ENCODE measurements at regions of chr2 and their contacts with region 1.

Region 1: GRCh38 chr2:34105015-34105767 is 506.1 kb upstream of the FAM98A start:
- DNase-seq: peak; percentile 83
- H3K4me3 ChIP-seq: peak overlapping the region in 1 of 3 experiments; percentile 3
- H3K27ac ChIP-seq: peak overlapping the region; percentile 73
- H3K4me1 ChIP-seq: peaks cover 17% of the 10 kb centered on the region
- H3K27me3 ChIP-seq: no peaks in the 10 kb centered on the region
- CTCF ChIP-seq: no peak

Region 2: GRCh38 chr2:34050413-34050812 is 54.8 kb before region 1 on chr2:
- CTCF ChIA-PET with region 1: interaction called, 12 read pairs
- dilution Hi-C with region 1: no loop called
- in situ Hi-C with region 1: no loop called
- intact Hi-C with region 1: no loop called
- DNase-seq: no peak
- H3K4me3 ChIP-seq: no peak overlapping the region
- H3K27ac ChIP-seq: no peak overlapping the region
- H3K4me1 ChIP-seq: no peaks in the 10 kb centered on the region
- H3K27me3 ChIP-seq: no peaks in the 10 kb centered on the region
- CTCF ChIP-seq: no peak

Region 3: GRCh38 chr2:34179511-34179910 is 74.3 kb after region 1 on chr2:
- CTCF ChIA-PET with region 1: no interaction called
- dilution Hi-C with region 1: no loop called
- in situ Hi-C with region 1: no loop called
- intact Hi-C with region 1: no loop called
- DNase-seq: no peak
- H3K4me3 ChIP-seq: no peak overlapping the region
- H3K27ac ChIP-seq: no peak overlapping the region
- H3K4me1 ChIP-seq: no peaks in the 10 kb centered on the region
- H3K27me3 ChIP-seq: no peaks in the 10 kb centered on the region
- CTCF ChIP-seq: no peak

Region 4: GRCh38 chr2:34549710-34550345 is 444.6 kb after region 1 on chr2:
- CTCF ChIA-PET with region 1: no interaction called
- dilution Hi-C with region 1: no loop called
- in situ Hi-C with region 1: no loop called
- intact Hi-C with region 1: loop called (anchors 5 kb)
- DNase-seq: peak; percentile 82
- H3K4me3 ChIP-seq: no peak overlapping the region
- H3K27ac ChIP-seq: peak overlapping the region; percentile 55
- H3K4me1 ChIP-seq: peaks cover 6% of the 10 kb centered on the region
- H3K27me3 ChIP-seq: no peaks in the 10 kb centered on the region
- CTCF ChIP-seq: no peak